Calu3 (cell line): ENCODE measurements at regions of chr7 and their contacts with region 1.

Region 1: GRCh38 chr7:108146070-108146837 is 16.1 kb upstream of the LAMB4 start:
- DNase-seq: peak; percentile 66
- H3K4me3 Mint-ChIP-seq: no peak overlapping the region
- H3K27ac Mint-ChIP-seq: no peak overlapping the region
- H3K4me1 Mint-ChIP-seq: peaks cover 9% of the 10 kb centered on the region
- H3K27me3 Mint-ChIP-seq: no peaks in the 10 kb centered on the region
- CTCF ChIP-seq: peak; percentile 75

Region 2: GRCh38 chr7:107711301-107711700 is 435.0 kb before region 1 on chr7:
- CTCF ChIA-PET with region 1: interaction called, 10 read pairs
- intact Hi-C with region 1: no loop called
- DNase-seq: no peak
- H3K4me3 Mint-ChIP-seq: no peak overlapping the region
- H3K27ac Mint-ChIP-seq: no peak overlapping the region
- H3K4me1 Mint-ChIP-seq: no peaks in the 10 kb centered on the region
- H3K27me3 Mint-ChIP-seq: no peaks in the 10 kb centered on the region
- CTCF ChIP-seq: no peak

Region 3: GRCh38 chr7:107953924-107954303 is 192.3 kb before region 1 on chr7:
- CTCF ChIA-PET with region 1: no interaction called
- intact Hi-C with region 1: loop called (anchors 5 kb)
- DNase-seq: no peak
- H3K4me3 Mint-ChIP-seq: no peak overlapping the region
- H3K27ac Mint-ChIP-seq: no peak overlapping the region
- H3K4me1 Mint-ChIP-seq: peaks cover 17% of the 10 kb centered on the region
- H3K27me3 Mint-ChIP-seq: no peaks in the 10 kb centered on the region
- CTCF ChIP-seq: no peak

Region 4: GRCh38 chr7:108114117-108114841 is 32.0 kb before region 1 on chr7:
- CTCF ChIA-PET with region 1: interaction called, 5 read pairs
- intact Hi-C with region 1: loop called (anchors 1 kb)
- DNase-seq: peak; percentile 19
- H3K4me3 Mint-ChIP-seq: no peak overlapping the region
- H3K27ac Mint-ChIP-seq: no peak overlapping the region
- H3K4me1 Mint-ChIP-seq: no peaks in the 10 kb centered on the region
- H3K27me3 Mint-ChIP-seq: no peaks in the 10 kb centered on the region
- CTCF ChIP-seq: peak; percentile 58

Region 5: DNA sequence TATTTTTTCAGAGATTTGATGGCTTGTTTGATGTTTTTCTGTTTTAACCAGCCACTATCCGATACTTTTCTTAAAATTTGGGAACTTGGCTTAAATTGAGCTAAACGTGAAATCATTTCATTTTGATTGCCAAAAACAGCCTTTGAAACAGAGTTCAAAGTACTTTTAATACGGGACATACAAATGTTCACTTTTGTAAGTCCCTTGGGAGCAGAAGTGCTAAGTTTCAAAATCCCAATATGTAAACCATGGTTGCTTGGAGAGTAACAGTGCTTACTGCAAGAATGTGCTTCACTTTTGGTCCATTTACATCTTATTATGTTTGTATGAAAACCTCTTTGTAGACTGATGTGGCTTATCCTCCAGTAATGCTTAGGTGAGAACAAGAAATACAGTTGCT is 368.8 kb after region 1 on chr7:
- CTCF ChIA-PET with region 1: no interaction called
- intact Hi-C with region 1: no loop called
- DNase-seq: no peak
- H3K4me3 Mint-ChIP-seq: no peak overlapping the region
- H3K27ac Mint-ChIP-seq: no peak overlapping the region
- H3K4me1 Mint-ChIP-seq: no peaks in the 10 kb centered on the region
- H3K27me3 Mint-ChIP-seq: no peaks in the 10 kb centered on the region
- CTCF ChIP-seq: no peak